Dorsolateral prefrontal cortex (tissue), 120 donors: ENCODE measurements at regions of chr15 and their contacts with region 1.

Region 1: GRCh38 chr15:76190834-76191538 is 120.3 kb downstream of the ETFA start:
- DNase-seq: peak; percentile 68 to 91 (median 78)
- H3K4me3 ChIP-seq: peak overlapping the region in 13 of 59 donors; percentile 3 to 43 (median 28)
- H3K27ac ChIP-seq: peak overlapping the region in 1 of 59 donors; percentile 21
- H3K27me3 ChIP-seq: peaks cover 0 to 4% (median 0%) of the 10 kb centered on the region in 45 donors
- CTCF ChIP-seq: peak; percentile 51 to 94 (median 86)

Region 2: GRCh38 chr15:76084256-76084655 is 106.7 kb before region 1 on chr15:
- intact Hi-C with region 1: no loop called
- DNase-seq: no peak
- H3K4me3 ChIP-seq: no peak overlapping the region
- H3K27ac ChIP-seq: no peak overlapping the region
- H3K27me3 ChIP-seq: no peaks in the 10 kb centered on the region
- CTCF ChIP-seq: no peak

Region 3: DNA sequence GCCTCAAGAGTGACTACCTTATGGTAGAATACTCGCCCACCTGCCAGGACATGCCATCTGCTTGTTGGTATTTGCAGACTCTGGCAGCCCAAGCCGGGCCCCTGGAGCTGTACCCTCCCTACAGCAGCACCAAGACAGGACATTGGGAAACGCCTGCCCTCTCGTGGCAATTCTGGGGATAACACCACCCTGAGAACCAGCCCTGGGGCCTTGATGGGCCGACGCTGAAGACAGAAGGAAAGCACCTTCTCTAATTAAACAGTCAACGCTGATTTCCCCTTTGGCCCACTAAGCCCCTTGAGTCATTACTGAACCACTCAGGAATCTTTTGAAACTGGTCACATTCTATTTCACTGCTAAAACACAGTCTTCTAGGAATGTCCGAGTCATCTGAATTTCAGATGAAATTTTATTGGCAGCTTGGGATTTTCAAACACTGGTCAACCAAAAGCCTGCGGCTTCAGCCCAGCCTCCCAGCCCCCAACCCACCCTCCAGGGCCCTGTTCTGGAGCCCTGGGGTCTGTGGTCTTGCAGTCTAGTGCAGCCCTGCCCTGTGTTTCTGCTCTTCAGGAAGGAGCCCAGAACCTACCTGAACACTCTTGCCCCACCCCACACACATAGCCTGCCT is 39.9 kb before region 1 on chr15:
- intact Hi-C with region 1: no loop called
- DNase-seq: peak; percentile 58 to 96 (median 78)
- H3K4me3 ChIP-seq: peak overlapping the region in 9 of 59 donors; percentile 2 to 20 (median 8)
- H3K27ac ChIP-seq: peak overlapping the region in 18 of 59 donors; percentile 9 to 80 (median 28)
- H3K27me3 ChIP-seq: peaks cover 0 to 5% (median 0%) of the 10 kb centered on the region in 45 donors
- CTCF ChIP-seq: peak; percentile 45 to 94 (median 85)

Region 4: DNA sequence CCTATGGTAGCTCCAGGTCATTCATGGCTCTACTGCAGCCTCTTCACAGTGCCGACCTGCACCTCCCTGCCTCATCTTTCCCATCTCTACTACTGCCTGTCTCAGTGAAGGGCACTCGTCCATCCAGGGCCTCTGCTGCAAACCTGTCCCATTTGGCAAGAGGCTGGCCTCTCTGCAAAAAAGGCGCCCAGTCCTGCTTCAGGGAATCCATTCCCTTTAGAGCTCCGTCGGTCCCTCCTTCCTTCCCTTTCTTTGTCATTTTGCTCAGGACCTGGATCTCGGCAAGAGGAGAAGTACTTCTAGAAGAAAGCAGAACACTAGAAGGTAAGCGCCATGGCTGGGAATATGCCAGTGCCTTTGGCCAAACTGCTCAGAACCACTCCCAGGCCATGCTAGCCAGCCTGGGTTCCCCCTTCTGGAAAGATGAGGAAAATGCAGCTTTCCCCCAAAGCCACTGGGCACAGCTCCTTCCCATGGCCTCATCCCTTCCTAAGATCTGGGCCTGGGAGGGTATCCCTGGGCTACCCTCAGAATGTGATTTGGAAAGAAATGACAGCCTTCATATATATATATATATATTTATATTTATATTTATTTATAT is 139.2 kb after region 1 on chr15:
- intact Hi-C with region 1: loop called (anchors 5 to 10 kb)
- DNase-seq: peak in 1 of 10 donors; percentile 57
- H3K4me3 ChIP-seq: no peak overlapping the region
- H3K27ac ChIP-seq: no peak overlapping the region
- H3K27me3 ChIP-seq: peaks cover 0 to 54% (median 23%) of the 10 kb centered on the region in 45 donors
- CTCF ChIP-seq: peak in 48 of 56 donors; percentile 16 to 64 (median 39)

Region 5: GRCh38 chr15:76866716-76867321 is 675.8 kb after region 1 on chr15:
- intact Hi-C with region 1: loop called in 1 of 2 experiments (anchors 10 kb)
- DNase-seq: peak in 1 of 10 donors; percentile 7
- H3K4me3 ChIP-seq: no peak overlapping the region
- H3K27ac ChIP-seq: no peak overlapping the region
- H3K27me3 ChIP-seq: no peaks in the 10 kb centered on the region
- CTCF ChIP-seq: peak in 54 of 56 donors; percentile 20 to 74 (median 52)